Lower leg skin (tissue), 4 donors: ENCODE measurements at regions of chr13 and their contacts with region 1.

Region 1: DNA sequence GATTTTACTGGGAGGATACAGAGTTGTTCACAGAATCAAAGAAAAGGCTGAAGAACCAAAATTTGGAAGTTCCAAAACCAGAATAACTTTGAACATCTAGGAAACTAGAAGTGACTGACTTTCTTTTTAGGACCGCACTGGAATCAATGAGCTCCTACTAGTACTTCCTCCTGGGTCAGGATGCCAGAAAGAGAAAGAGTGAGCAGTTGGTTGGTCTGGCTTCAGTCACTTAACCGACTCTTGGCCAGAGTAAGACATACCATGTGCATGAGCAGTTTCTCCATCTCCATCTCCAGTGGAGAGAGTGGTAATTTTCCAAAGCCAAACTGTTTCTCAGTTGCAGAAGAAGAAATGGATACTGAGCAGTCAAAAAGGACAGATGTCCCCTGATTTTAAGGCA is 27.1 kb upstream of the MTUS2 start:
- DNase-seq: no peak
- H3K4me3 ChIP-seq: no peak overlapping the region
- CTCF ChIP-seq: no peak
- POLR2A ChIP-seq: no peak

Region 2: DNA sequence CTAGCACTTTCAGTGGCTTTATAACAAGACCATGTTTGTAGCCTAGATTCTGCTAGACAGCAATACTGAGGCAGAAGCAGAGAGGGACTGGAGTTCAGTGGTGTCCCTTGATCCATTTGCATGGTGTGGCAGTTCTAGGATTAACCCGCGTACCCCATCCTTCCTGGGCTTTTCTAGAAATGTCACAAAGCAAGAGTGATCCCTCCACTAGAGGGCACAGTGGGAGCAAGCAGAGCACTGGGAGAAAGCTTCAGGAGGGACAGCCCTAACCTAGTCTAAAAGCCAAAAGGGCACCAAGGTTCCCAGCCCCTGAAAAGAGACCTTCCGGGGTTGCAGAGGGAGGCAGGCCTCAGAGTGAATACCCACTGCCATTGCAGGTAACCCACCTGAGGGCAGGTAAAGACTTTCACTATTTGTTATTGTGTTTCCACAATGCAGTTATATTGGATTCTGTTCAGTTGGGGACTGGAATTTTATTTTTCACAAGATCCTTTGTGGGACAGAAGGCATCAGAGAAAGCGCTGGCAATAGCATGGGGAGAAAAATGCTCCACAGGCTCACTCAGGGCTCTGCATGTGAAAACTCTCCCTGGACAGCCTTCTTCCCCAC is 468.7 kb before region 1 on chr13:
- intact Hi-C with region 1: loop called (anchors 10 kb)
- DNase-seq: peak in 1 of 2 donors; percentile 48
- H3K4me3 ChIP-seq: no peak overlapping the region
- CTCF ChIP-seq: no peak
- POLR2A ChIP-seq: no peak

Region 3: GRCh38 chr13:28376604-28377003 is 416.4 kb before region 1 on chr13:
- intact Hi-C with region 1: no loop called
- DNase-seq: no peak
- H3K4me3 ChIP-seq: no peak overlapping the region
- CTCF ChIP-seq: no peak
- POLR2A ChIP-seq: no peak